SK-N-SH (cell line): ENCODE measurements at regions of chr3 and their contacts with region 1.

Region 1: GRCh38 chr3:25648107-25648535 is 16.6 kb downstream of the TOP2B start:
- DNase-seq: peak; percentile 59
- H3K4me3 ChIP-seq: peak overlapping the region in 1 of 2 experiments; percentile 40; a peak in 1 of 4 replicates
- H3K27ac ChIP-seq: no peak overlapping the region
- H3K4me1 ChIP-seq: peaks cover 0 to 2% of the 10 kb centered on the region in 2 experiments; a peak in 2 of 4 replicates
- H3K27me3 ChIP-seq: no peaks in the 10 kb centered on the region
- CTCF ChIP-seq: peak; percentile 90
- EP300 ChIP-seq: no peak
- RAD21 ChIP-seq: peak; percentile 92

Region 2: DNA sequence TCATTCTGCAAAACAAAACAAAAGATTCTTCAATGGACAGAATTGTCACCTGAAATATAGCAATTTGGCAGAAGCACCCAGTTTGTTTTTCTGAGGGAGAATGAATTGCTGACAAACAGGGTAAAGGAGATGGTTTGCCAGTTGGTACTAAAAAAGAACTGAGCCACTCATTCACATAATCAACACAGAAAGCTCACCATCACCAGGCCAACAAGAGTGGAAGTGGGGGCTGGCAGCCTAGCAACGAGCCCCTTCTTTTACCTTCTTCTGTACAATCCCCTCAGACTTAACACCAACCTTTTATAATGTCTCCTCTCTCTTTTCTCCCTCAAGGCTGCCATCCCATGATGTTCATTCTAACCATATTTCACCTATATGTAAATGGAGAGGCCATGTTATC is 10.7 kb after region 1 on chr3:
- CTCF ChIA-PET with region 1: interaction called, 25 read pairs
- POLR2A ChIA-PET with region 1: no interaction called
- DNase-seq: no peak
- H3K4me3 ChIP-seq: no peak overlapping the region
- H3K27ac ChIP-seq: no peak overlapping the region
- H3K4me1 ChIP-seq: peaks cover 0 to 14% of the 10 kb centered on the region in 2 experiments; a peak in 3 of 4 replicates
- H3K27me3 ChIP-seq: no peaks in the 10 kb centered on the region
- CTCF ChIP-seq: no peak
- EP300 ChIP-seq: no peak
- RAD21 ChIP-seq: no peak

Region 3: GRCh38 chr3:25713335-25713985 is 65.3 kb after region 1 on chr3:
- CTCF ChIA-PET with region 1: no interaction called
- POLR2A ChIA-PET with region 1: no interaction called
- DNase-seq: no peak
- H3K4me3 ChIP-seq: no peak overlapping the region
- H3K27ac ChIP-seq: no peak overlapping the region
- H3K4me1 ChIP-seq: peaks cover 0 to 2% of the 10 kb centered on the region in 2 experiments; a peak in 1 of 4 replicates
- H3K27me3 ChIP-seq: no peaks in the 10 kb centered on the region
- CTCF ChIP-seq: no peak
- EP300 ChIP-seq: no peak
- RAD21 ChIP-seq: no peak

Region 4: GRCh38 chr3:25789596-25790556 is 141.8 kb after region 1 on chr3 and contains the start of gene OXSM:
- CTCF ChIA-PET with region 1: interaction called, 11 read pairs
- POLR2A ChIA-PET with region 1: no interaction called
- DNase-seq: peak; percentile 85
- H3K4me3 ChIP-seq: peak within 1 kb of the TSS; percentile 73 to 79
- H3K27ac ChIP-seq: peak within 1 kb of the TSS; percentile 71 to 85
- H3K4me1 ChIP-seq: peaks cover 0 to 13% of the 10 kb centered on the region in 2 experiments; a peak in 2 of 4 replicates
- H3K27me3 ChIP-seq: no peaks in the 10 kb centered on the region
- CTCF ChIP-seq: no peak
- EP300 ChIP-seq: no peak
- RAD21 ChIP-seq: no peak
- polyA plus RNA-seq, gene OXSM: 12.1 and 21.6 TPM in 2 replicates

Region 5: DNA sequence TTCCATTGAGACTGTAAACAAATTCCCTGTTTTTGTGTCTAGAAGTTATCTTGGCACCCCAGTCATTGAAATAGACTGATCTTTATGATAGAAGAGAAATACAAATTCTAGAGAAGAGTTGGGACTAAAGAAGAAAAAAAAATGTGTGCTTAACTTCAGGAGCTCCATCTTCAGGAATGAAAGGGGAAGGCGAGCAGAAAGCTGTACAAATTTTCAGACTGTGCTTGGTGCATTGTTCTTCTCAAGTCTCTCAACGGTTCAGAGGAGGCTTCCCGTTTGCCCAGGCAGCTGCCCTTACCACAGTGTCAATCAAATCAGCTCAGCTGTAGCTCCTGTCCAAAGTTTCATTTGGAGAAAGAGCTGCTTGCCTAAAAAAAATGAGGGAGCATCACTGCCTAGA is 183.5 kb after region 1 on chr3:
- CTCF ChIA-PET with region 1: interaction called, 14 read pairs
- POLR2A ChIA-PET with region 1: no interaction called
- DNase-seq: peak; percentile 14
- H3K4me3 ChIP-seq: no peak overlapping the region
- H3K27ac ChIP-seq: peak overlapping the region in 1 of 2 experiments; percentile 91; a peak in 2 of 4 replicates
- H3K4me1 ChIP-seq: peaks cover 0 to 7% of the 10 kb centered on the region in 2 experiments; a peak in 3 of 4 replicates
- H3K27me3 ChIP-seq: no peaks in the 10 kb centered on the region
- CTCF ChIP-seq: peak; percentile 44
- EP300 ChIP-seq: no peak
- RAD21 ChIP-seq: peak; percentile 62

Region 6: DNA sequence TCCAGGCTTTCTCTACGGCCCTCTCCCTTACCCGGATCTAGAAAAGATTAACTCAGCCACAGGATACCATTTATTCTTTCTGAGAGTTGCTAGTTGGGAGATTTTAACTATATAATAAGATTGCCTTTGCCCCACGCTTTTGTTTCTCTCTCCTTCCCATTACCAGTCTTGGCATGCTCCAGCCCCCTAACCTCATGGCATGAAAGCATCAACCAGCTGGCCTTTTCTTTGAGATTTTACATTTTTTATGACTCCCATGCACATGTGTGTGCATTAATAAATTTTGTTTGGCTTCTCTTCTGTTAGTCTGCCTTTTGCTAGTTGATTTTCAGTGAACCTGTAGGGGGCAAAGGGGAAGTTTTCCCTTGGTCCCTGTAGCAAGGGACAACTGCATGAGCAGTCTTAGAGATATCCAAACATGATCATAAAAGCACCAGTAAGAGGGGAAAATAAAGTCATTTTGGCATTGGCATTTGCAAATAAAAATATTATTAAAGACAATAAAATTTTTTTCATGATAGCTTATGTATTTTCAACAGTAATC is 215.4 kb after region 1 on chr3:
- CTCF ChIA-PET with region 1: interaction called, 17 read pairs
- POLR2A ChIA-PET with region 1: no interaction called
- DNase-seq: no peak
- H3K4me3 ChIP-seq: no peak overlapping the region
- H3K27ac ChIP-seq: no peak overlapping the region
- H3K4me1 ChIP-seq: no peaks in the 10 kb centered on the region
- H3K27me3 ChIP-seq: no peaks in the 10 kb centered on the region
- CTCF ChIP-seq: peak; percentile 25; the same call in 1 of the 2 replicates
- EP300 ChIP-seq: no peak
- RAD21 ChIP-seq: no peak